ENCODE measurements at regions of chr12 and their contacts with region 1.

Region 1: DNA sequence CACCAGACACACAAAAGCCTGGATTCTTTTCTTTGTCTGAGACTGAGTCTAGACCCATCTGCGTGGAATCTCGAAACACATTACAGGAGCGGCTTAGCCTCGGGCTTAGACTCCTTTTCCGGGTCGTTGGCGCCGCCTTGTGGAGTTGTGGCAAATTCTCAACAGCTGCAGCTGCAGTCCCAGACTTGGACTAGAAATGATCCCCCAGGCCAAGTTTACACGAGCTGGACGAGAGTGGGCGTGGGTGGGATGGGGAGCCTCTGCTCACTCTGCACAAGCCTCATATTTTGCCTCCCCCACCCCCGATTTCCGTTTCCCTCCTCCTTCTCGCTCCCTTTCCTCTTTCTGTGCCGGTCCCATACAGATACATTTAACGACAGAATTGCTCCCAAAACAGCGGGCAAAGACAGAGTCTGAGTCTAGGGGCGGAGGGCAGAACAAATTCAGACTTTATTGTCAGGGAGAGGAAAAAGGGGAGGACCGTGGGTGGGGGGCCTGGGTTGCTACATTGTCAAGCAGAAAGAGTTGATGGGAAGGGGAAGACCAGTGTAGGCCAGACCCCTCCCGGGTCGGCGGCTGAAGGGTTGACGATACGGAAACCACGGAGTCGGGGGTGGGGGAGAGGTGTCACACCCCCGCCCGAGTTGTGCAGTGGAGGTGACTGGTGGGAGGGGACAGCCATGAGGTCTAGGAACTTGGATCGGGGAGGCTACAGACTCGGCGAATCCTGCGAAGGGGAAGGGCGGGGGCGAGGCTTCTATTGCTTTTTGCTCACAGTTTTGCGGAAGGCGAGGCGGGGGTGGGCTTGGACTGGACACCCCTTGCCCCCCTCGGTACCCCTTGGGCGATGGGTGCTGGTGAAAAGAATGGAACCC is 4.7 kb upstream of the GPR84 start:
- DNase-seq: peak; percentile 95
- H3K4me3 ChIP-seq: peak overlapping the region in 3 of 4 donors; percentile 42 to 52 (median 51)
- H3K27ac ChIP-seq: peak overlapping the region; percentile 67 to 74 (median 70)
- H3K4me1 ChIP-seq: peaks cover 0 to 41% (median 36%) of the 10 kb centered on the region in 4 donors
- H3K27me3 ChIP-seq: no peaks in the 10 kb centered on the region
- CTCF ChIP-seq: peak; percentile 73 to 85 (median 82)
- EP300 ChIP-seq: no peak
- POLR2A ChIP-seq: no peak

Region 2: DNA sequence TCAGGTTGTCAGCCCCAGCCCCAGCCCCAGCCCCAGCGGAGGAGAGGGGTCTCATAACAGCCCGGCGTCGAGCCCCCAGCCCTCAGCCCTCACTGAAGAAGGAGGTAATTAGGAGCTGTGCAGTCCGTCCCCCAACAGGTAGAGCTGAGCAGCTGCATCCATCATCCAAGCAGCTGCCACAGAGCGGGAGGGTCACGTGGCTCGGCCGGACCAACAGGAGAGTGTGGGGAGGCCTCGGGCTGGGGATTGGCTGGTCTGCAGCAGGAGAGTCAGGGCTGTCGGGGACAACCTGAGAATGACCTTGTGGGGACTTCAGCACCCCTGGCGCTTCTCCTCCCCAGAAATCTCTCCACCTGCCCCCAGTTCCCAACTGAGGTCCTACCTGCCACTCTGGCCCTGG is 209.8 kb before region 1 on chr12:
- intact Hi-C with region 1: no loop called
- DNase-seq: no peak
- H3K4me3 ChIP-seq: no peak overlapping the region
- H3K27ac ChIP-seq: no peak overlapping the region
- H3K4me1 ChIP-seq: peaks cover 0 to 26% (median 20%) of the 10 kb centered on the region in 4 donors
- H3K27me3 ChIP-seq: no peaks in the 10 kb centered on the region
- CTCF ChIP-seq: no peak
- EP300 ChIP-seq: no peak
- POLR2A ChIP-seq: no peak

Region 3: GRCh38 chr12:54294152-54294952 is 74.6 kb before region 1 on chr12:
- intact Hi-C with region 1: loop called (anchors 2 kb)
- DNase-seq: no peak
- H3K4me3 ChIP-seq: no peak overlapping the region
- H3K27ac ChIP-seq: no peak overlapping the region
- H3K4me1 ChIP-seq: no peaks in the 10 kb centered on the region
- H3K27me3 ChIP-seq: peaks cover 0 to 9% (median 9%) of the 10 kb centered on the region in 3 donors
- CTCF ChIP-seq: peak; percentile 56 to 84 (median 62)
- EP300 ChIP-seq: no peak
- POLR2A ChIP-seq: no peak

Measured in sigmoid colon (tissue), 7 donors.